Stomach (tissue), 19 donors: ENCODE measurements at regions of chr19 and their contacts with region 1.

Region 1: DNA sequence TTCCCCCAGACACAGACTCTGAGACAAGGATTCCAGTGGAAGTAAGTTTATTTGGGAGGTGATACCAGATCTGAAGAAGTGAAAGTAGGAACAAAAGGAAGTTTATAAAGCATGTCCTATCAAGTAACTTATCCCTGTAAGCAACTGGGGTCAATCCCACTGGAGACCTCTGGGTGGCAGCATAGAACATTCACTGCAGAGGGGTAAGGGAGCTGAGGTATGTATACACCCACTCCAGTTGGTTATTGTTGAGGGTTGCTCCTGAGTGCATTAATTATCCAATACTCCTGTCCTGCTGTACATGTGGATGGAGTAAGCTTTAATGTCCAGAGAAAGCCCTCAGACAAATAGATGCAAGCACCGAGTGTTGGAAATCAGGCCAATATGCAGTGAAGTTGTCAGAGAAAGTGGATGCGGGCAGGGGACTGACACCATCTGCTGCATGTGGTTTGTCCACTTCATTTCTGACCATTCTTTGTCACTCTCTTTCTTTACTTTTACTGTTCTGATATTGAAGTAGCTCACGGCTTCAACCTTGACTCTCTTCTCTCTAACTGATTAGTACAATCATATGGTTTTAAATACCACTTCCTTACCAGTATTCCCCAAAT is 46.7 kb downstream of the NOTCH3 start:
- DNase-seq: peak in 1 of 2 donors; percentile 41
- H3K4me3 ChIP-seq: no peak overlapping the region
- H3K27ac ChIP-seq: no peak overlapping the region
- H3K4me1 ChIP-seq: no peaks in the 10 kb centered on the region
- H3K27me3 ChIP-seq: peaks cover 0 to 8% (median 0%) of the 10 kb centered on the region in 3 donors
- CTCF ChIP-seq: peak in 4 of 7 experiments; percentile 8 to 14 (median 11)
- EP300 ChIP-seq: no peak
- POLR2A ChIP-seq: no peak

Region 2: DNA sequence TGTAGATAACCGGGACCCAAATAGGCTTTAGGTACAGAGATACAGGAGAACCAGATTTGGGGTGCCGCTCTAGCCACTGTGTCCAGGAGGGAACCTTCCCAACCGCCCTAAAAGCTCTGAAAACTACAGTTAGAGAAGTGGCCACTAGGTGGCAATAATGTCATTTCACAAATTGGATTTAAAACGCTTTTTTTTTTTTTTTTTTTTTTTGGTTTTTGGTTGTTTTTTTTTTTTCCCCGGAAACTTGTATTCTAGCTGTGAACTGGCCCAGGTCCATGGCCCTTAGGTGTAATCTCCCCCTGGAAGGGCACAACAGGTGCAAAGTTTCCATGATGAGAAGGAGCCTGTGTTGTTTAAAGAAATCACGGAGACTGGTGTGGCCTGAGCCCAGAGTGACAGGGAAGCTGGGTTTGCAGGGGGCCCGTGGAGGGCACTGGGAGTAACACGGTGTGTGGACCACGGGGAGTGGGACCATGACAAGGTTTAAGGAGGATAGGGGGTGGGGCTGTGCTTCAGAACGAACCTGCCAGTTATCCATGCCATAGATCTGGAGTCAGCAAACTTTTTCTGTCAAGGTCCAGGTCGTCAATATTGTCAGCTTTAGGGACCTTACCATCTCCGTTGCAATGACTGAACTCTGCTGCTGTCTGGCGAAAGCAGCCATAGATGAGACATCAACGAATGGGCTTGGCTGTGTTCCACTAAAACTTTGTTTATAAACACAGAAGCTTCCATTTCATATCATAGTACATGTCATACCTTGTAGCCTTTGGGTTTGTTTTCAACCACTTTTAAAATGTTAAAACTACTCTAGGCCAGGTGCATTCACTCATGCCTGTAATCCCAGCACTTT is 62.0 kb before region 1 on chr19:
- intact Hi-C with region 1: loop called (anchors 5 kb)
- DNase-seq: peak in 1 of 2 donors; percentile 86
- H3K4me3 ChIP-seq: no peak overlapping the region
- H3K27ac ChIP-seq: no peak overlapping the region
- H3K4me1 ChIP-seq: peaks cover 0 to 7% (median 5%) of the 10 kb centered on the region in 4 donors
- H3K27me3 ChIP-seq: peaks cover 0 to 11% (median 0%) of the 10 kb centered on the region in 3 donors
- CTCF ChIP-seq: peak in 5 of 7 experiments; percentile 20 to 76 (median 66)
- EP300 ChIP-seq: no peak
- POLR2A ChIP-seq: no peak